ENCODE measurements at regions of chr20 and their contacts with region 1.

Region 1: DNA sequence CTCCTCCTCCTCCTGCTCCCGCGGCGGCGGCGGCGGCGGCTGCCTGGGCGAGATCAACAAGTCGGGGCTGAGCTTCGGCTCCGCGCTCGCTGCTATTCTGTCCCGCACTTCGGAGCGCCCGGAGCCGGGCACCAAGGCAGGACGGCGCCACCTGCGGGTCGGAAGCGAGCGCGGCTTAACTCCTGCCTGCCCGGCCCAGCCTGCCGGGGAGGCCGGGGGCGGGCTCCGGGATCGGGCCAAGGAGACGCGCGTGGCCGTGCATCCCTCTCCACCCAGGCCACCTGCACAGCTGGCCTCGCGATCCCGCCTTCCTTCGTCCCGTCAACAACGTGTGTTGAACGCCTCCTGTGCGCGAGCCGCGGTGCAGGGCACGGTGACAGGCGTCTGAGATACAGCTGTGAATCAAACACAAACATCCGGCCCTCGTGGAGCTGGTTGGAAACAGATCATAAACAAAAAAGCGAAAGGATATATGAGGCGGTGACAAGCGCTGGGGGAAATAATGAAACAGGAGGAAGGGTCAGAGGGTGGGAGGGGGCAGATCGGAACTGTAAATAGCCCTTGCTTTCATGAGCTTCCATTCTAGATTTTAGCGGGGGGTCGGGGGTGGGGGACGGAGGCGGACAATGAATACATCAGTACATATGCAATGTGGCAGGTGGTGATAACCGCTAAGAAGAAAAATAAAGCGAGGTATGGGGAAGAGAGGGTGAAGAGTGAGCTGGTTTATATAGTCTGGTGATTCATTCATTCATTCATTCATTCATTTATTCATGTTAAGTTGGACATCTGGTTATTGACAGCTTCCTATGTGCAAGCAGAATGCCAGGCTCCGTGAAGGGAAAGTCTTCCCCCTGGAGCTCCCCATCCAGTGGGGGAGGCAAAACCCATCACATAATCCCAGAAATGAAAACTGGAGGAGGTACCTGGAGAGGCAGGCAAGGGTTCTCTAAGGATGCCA is 2.0 kb upstream of the KCNB1 start:
- DNase-seq: peak; percentile 92
- H3K27ac ChIP-seq: no peak overlapping the region
- CTCF ChIP-seq: peak; percentile 98

Region 2: DNA sequence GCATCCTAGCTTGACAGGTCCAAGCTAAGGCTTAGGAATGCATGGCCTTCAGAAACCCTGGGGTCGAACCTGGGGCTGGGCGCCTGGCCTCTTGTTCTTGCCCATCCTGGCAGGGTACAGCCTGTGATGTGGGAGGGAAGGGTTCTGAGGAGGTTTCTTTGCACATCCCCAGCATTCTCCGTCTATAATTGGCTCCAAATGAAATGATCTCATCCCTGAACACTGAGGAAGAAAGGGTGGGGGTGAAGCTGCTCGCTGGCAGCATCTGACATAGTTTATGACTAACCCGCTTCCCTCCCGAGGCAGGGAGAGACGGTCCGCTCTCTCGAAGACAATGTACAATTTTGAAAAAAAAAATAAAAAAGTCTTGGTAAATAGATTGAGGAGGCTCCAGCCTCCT is 139.5 kb before region 1 on chr20:
- CTCF ChIA-PET with region 1: interaction called, 120 read pairs
- POLR2A ChIA-PET with region 1: no interaction called
- DNase-seq: peak; percentile 100
- H3K27ac ChIP-seq: peak overlapping the region; percentile 97
- CTCF ChIP-seq: no peak

Region 3: GRCh38 chr20:49496553-49497397 is 12.3 kb after region 1 on chr20:
- CTCF ChIA-PET with region 1: interaction called, 37 read pairs
- POLR2A ChIA-PET with region 1: no interaction called
- DNase-seq: no peak
- H3K27ac ChIP-seq: no peak overlapping the region
- CTCF ChIP-seq: no peak

Region 4: DNA sequence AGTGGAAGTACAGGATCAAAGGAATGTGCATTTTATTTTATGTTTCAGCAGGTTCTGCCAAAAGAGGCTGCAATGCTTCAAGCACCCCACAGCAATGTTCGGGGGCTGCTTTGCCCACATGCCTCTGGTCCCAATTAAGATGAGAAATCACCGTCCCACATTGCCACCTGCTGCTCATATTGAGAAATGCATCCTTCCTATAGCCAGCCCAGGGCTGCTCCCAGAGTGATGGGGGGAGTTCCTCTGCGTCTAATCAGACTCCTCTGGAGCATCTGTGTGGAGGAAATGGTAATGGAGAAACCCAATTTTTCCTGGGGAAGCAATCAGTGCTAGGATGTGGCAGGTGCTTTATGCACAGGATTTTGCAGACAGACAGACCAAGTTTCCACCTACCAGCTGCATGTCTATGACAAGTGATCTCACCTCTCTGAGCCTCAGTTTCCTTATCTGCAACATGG is 49.8 kb after region 1 on chr20:
- CTCF ChIA-PET with region 1: interaction called, 16 read pairs
- POLR2A ChIA-PET with region 1: no interaction called
- DNase-seq: peak; percentile 91
- H3K27ac ChIP-seq: no peak overlapping the region
- CTCF ChIP-seq: peak; percentile 98